Calu3 (cell line): ENCODE measurements at regions of chr19 and their contacts with region 1.

Region 1: DNA sequence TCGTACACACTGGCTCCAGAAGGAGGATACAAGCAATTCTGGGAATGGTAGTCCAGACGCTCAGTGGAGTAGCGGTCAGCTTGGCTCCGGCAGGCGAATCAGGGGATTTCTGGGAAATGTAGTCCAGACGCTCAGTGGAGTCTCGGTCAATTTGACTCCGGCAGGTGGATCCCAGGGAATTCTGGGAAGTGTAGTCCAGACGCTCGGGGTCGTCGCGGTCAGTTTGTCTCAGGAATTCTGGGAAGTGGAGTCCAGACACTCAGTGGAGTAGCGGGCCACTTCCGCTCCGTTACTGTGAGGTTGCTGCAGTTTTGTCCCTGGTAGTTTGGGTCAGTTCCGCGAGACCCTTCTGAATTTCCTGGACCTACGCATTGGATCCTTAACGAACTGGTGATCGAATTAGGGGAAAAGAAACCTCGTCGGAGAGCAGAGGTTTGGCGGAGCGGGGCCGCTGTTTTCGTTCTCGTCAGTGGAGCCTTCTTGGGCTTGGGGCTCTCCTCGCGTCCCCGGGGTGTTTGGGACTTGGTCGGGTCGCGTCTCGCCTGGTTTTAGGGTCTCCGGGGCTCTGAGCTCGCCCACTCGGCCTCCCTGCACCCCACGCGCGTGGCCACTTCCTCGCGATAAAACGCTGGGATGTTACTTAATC is at the start of gene ZNF225:
- DNase-seq: peak; percentile 96
- H3K4me3 Mint-ChIP-seq: peak within 1 kb of the TSS; percentile 97
- H3K27ac Mint-ChIP-seq: peak within 1 kb of the TSS; percentile 89
- H3K4me1 Mint-ChIP-seq: peaks cover 14% of the 10 kb centered on the region
- H3K27me3 Mint-ChIP-seq: no peaks in the 10 kb centered on the region
- CTCF ChIP-seq: no peak
- total RNA-seq, gene ZNF225: 5.3 and 6.1 TPM in 2 replicates

Region 2: DNA sequence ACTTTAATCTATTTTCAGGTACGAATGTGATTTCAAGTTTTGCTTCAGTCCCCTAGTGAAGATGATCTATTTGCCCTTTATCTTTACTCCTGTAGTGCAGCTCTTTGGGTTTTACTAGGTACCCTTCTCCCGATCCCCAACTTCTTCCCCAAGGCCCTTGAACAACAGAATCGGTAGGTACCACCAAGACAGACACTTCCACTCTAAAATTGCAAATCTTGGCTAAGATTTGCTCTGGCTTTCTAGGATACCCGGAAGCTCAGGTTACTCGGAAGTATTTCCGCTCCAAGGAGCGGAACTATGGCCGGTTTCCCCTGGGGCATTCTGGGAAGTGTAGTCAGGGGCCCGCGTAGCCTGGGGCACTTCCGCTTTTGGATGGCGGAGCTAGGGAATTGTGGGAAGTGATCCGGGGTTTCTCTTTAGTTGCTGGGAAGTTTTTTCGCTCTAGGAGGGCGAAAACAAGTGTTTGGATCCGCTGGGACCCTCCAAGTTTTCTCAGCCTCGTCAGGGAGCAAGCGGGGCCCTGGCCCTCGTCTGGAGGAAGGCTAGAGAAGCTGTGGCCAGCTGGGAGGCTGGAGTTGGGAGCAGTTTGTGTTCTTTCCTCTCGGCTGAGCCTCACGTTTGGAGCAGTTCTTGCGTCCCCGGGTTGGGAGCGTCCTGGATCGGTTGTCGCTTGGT is 94.0 kb after region 1 on chr19:
- CTCF ChIA-PET with region 1: no interaction called
- intact Hi-C with region 1: loop called (anchors 5 kb)
- DNase-seq: peak; percentile 94
- H3K4me3 Mint-ChIP-seq: peak overlapping the region; percentile 88
- H3K27ac Mint-ChIP-seq: peak overlapping the region; percentile 75
- H3K4me1 Mint-ChIP-seq: no peaks in the 10 kb centered on the region
- H3K27me3 Mint-ChIP-seq: no peaks in the 10 kb centered on the region
- CTCF ChIP-seq: no peak